Heart left ventricle (tissue), 16 donors: ENCODE measurements at regions of chrX and their contacts with region 1.

Region 1: GRCh38 chrX:72540318-72540717 is 32.3 kb downstream of the HDAC8 start:
- DNase-seq: no peak
- ATAC-seq: peak in 3 of 4 donors; percentile 33 to 59 (median 53)
- H3K4me3 ChIP-seq: peak overlapping the region in 1 of 12 donors; percentile 1
- H3K27ac ChIP-seq: peak overlapping the region in 4 of 12 donors; percentile 9 to 35 (median 30)
- H3K4me1 ChIP-seq: peaks cover 0 to 13% (median 0%) of the 10 kb centered on the region in 12 donors
- H3K27me3 ChIP-seq: peaks cover 0 to 4% (median 0%) of the 10 kb centered on the region in 9 donors
- CTCF ChIP-seq: peak in 9 of 12 donors; percentile 21 to 51 (median 37)
- POLR2A ChIP-seq: no peak

Region 2: DNA sequence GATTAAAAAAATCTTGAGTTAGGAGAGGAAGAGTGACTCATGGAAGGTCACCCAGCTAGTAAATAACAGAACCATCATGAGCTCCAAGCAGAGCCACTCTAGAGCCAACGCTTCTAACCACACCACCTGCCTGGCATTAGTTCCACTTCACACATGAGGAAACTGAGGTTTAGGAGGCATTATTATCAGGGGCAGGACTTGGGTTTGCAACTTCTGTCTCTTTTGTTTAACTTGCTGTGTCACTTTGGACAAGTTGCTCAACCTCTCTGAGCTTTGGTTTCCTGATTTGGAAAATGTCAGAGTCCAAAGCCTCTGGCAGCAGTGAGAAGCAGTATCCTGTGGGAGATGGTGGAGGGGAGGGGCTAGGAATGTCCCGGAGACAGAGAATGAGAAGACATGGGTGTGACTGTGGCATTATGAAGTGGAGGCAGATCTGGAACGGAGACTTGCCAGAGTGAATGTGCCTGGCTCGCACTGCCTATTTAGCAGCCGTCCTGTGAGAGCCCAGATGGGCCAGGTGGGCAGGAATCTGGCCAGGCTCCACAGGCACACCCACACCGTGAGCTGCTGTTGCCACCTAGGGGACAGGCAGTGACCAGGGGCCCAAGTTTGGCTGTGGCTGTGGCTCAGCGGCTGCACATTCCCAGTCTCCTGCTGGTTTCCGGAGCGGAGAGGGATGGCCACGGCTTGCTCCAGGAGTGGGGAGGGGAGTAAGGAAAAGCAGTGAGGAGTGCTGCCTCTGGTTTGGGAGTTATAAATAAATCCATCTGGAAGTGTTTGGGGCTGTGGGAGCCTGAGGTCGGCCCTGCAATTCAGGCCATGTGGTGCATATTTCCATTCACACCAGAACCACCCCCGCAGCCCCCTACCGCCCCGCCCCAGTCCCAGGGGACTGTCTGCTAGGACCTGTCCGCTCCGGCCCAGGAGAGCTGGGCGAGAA is 536.2 kb before region 1 on chrX:
- intact Hi-C with region 1: loop called in 1 of 10 experiments (anchors 10 kb)
- DNase-seq: peak; percentile 54 to 67 (median 58)
- ATAC-seq: peak; percentile 71 to 85 (median 76)
- H3K4me3 ChIP-seq: peak overlapping the region in 2 of 12 donors; percentile 1 to 19
- H3K27ac ChIP-seq: peak overlapping the region in 9 of 12 donors; percentile 25 to 81 (median 51)
- H3K4me1 ChIP-seq: peaks cover 0 to 20% (median 8%) of the 10 kb centered on the region in 12 donors
- H3K27me3 ChIP-seq: peaks cover 0 to 30% (median 0%) of the 10 kb centered on the region in 9 donors
- CTCF ChIP-seq: peak in 5 of 12 donors; percentile 15 to 44 (median 21)
- POLR2A ChIP-seq: no peak

Region 3: DNA sequence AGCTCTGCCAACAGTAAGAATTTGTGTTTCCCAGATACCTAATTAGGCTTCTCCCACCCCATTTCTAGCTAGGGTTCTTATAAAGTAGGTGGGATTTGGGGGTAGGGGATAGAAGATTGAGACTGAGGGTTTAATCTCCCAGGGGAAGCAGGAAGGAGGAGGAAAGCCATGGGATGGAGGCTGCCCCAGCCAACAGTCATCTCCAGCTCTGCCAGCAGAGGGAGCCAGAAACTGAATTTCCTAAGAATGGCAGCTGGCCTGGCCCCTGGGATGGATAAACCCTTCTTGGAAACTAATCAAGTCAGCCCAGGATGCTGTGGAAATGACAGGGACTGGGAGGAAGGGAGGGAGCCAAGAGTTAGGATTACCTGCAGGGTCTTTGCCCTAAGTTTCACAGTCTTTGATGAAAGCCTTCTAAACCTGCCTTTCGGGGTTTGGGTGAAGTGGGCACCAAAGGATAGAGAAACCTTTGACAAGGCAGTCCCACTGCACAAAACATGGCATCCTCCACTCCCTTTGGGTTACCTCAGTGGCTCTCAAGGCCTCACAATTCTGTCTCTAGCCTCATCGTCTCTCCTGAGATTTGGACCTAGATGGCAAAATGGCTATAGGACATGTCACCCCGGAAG is 294.7 kb before region 1 on chrX:
- intact Hi-C with region 1: loop called in 7 of 10 experiments (anchors 2 to 10 kb)
- DNase-seq: peak in 4 of 5 donors; percentile 8 to 62 (median 36)
- ATAC-seq: peak in 3 of 4 donors; percentile 59 to 68 (median 65)
- H3K4me3 ChIP-seq: no peak overlapping the region
- H3K27ac ChIP-seq: no peak overlapping the region
- H3K4me1 ChIP-seq: peaks cover 0 to 6% (median 0%) of the 10 kb centered on the region in 12 donors
- H3K27me3 ChIP-seq: no peaks in the 10 kb centered on the region
- CTCF ChIP-seq: peak; percentile 41 to 74 (median 54)
- POLR2A ChIP-seq: no peak

Region 4: GRCh38 chrX:72269671-72270251 is 270.6 kb before region 1 on chrX:
- intact Hi-C with region 1: loop called in 2 of 10 experiments (anchors 10 kb)
- DNase-seq: peak in 1 of 5 donors; percentile 36
- ATAC-seq: peak in 3 of 4 donors; percentile 35 to 62 (median 55)
- H3K4me3 ChIP-seq: no peak overlapping the region
- H3K27ac ChIP-seq: peak overlapping the region in 2 of 12 donors; percentile 28 to 32
- H3K4me1 ChIP-seq: peaks cover 0 to 23% (median 0%) of the 10 kb centered on the region in 12 donors
- H3K27me3 ChIP-seq: no peaks in the 10 kb centered on the region
- CTCF ChIP-seq: no peak
- POLR2A ChIP-seq: no peak

Region 5: GRCh38 chrX:72306851-72307645 is 233.3 kb before region 1 on chrX:
- intact Hi-C with region 1: loop called in 6 of 10 experiments (anchors 10 kb)
- DNase-seq: peak; percentile 40 to 67 (median 49)
- ATAC-seq: peak; percentile 29 to 86 (median 80)
- H3K4me3 ChIP-seq: peak overlapping the region; percentile 24 to 71 (median 56)
- H3K27ac ChIP-seq: no peak overlapping the region
- H3K4me1 ChIP-seq: peaks cover 0 to 35% (median 2%) of the 10 kb centered on the region in 12 donors
- H3K27me3 ChIP-seq: peaks cover 0 to 97% (median 0%) of the 10 kb centered on the region in 9 donors
- CTCF ChIP-seq: no peak
- POLR2A ChIP-seq: no peak

Region 6: GRCh38 chrX:72349190-72349589 is 191.1 kb before region 1 on chrX:
- intact Hi-C with region 1: no loop called
- DNase-seq: no peak
- ATAC-seq: no peak
- H3K4me3 ChIP-seq: no peak overlapping the region
- H3K27ac ChIP-seq: no peak overlapping the region
- H3K4me1 ChIP-seq: no peaks in the 10 kb centered on the region
- H3K27me3 ChIP-seq: peaks cover 0 to 7% (median 0%) of the 10 kb centered on the region in 9 donors
- CTCF ChIP-seq: no peak
- POLR2A ChIP-seq: no peak

Region 7: DNA sequence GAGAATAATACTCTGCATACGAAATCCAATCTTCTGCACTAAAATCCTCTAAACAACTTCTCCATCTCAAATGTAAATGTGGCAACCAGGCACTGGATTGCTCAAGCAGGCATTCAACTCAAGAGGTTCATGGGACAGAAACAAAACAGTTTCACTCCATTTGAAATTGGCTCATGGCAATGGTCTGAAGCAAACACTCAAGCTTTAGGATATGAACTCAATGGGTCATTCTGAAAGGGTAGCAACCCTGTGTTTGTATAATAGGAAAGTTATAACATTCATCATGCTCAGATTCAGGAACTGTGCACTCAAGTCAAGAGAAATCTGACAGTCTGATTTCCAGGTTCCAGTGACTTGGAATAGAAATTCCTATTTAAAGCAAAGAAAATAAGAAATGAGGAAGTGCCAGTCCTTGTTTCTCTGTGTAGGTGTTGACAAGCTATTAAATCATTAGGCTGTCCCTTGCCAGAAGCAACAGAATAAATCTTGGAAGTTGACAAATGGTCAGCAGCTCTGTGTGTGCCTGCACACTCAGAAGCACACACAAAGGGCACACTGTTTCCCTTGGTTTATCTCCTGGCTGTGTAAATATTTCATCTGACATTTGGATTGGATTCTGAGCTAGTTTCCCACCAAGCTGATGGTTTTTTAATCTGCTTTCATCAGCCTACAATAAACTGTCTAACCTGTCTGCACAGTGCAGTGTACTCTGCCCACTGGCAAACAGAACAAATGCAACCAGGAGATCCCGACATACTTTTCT is 158.7 kb before region 1 on chrX:
- intact Hi-C with region 1: loop called in 2 of 10 experiments (anchors 5 to 10 kb)
- DNase-seq: no peak
- ATAC-seq: peak; percentile 67 to 75 (median 70)
- H3K4me3 ChIP-seq: no peak overlapping the region
- H3K27ac ChIP-seq: no peak overlapping the region
- H3K4me1 ChIP-seq: peaks cover 0 to 12% (median 2%) of the 10 kb centered on the region in 12 donors
- H3K27me3 ChIP-seq: peaks cover 0 to 10% (median 0%) of the 10 kb centered on the region in 9 donors
- CTCF ChIP-seq: no peak
- POLR2A ChIP-seq: no peak